Activated CD4-positive, alpha-beta T cell treated with anti-CD3 and anti-CD28 coated beads for 36 hours (primary cell): ENCODE measurements at regions of chr3 and their contacts with region 1.

Region 1: DNA sequence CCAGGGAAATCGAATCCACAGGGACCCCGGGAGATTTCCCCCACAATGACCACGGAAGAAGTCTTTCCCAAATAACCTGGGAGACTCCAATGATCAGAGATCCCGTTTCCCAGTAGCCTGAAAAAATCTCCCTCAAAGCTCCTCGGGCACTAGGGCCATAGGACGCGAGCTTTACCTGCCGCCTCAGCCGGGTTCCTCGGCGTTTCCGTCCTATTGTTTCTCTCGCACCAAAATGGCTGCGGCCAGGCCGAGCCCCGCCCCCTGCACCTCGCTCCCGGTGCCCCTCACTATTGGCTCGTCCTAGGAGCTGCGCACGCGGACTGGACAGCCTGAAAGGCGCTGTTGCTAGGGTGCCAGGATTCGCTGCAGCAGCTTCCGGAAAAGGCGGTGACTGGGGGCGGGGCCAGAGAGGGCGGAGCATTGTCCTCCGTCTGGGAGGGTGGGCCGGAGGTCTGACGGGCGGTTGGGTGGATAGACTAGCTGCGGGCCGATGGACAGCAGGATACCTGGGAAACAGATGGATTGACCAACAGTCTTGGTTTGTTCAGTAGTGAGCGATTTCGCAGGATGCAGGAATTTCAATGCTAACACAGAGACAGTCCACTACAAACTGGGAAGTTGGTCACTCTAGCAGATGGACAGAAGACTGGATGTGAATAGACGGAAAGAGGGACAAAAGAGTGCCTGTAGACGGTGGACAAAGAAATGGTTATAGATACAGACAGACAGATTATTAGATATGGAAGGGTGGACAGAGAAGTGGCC is at the start of gene IP6K2:
- DNase-seq: peak; percentile 99
- ATAC-seq: peak; percentile 100
- H3K4me3 Mint-ChIP-seq: peak within 1 kb of the TSS; percentile 97
- H3K27ac Mint-ChIP-seq: peak within 1 kb of the TSS; percentile 97
- H3K4me1 Mint-ChIP-seq: peaks cover 31% of the 10 kb centered on the region
- H3K27me3 Mint-ChIP-seq: no peaks in the 10 kb centered on the region
- total RNA-seq, gene IP6K2: 39.4 to 48.3 TPM

Region 2: GRCh38 chr3:48188266-48189201 is 528.6 kb before region 1 on chr3 and contains the start of gene CDC25A:
- CTCF ChIA-PET with region 1: no interaction called
- POLR2A ChIA-PET with region 1: no interaction called
- intact Hi-C with region 1: loop called in 1 of 2 experiments (anchors 1 kb)
- DNase-seq: peak; percentile 98
- ATAC-seq: peak; percentile 99
- H3K4me3 Mint-ChIP-seq: peak within 1 kb of the TSS; percentile 96
- H3K27ac Mint-ChIP-seq: peak within 1 kb of the TSS; percentile 79
- H3K4me1 Mint-ChIP-seq: peaks cover 15% of the 10 kb centered on the region
- H3K27me3 Mint-ChIP-seq: peaks cover 7% of the 10 kb centered on the region
- total RNA-seq, gene CDC25A: 32.5 to 33.9 TPM

Region 3: DNA sequence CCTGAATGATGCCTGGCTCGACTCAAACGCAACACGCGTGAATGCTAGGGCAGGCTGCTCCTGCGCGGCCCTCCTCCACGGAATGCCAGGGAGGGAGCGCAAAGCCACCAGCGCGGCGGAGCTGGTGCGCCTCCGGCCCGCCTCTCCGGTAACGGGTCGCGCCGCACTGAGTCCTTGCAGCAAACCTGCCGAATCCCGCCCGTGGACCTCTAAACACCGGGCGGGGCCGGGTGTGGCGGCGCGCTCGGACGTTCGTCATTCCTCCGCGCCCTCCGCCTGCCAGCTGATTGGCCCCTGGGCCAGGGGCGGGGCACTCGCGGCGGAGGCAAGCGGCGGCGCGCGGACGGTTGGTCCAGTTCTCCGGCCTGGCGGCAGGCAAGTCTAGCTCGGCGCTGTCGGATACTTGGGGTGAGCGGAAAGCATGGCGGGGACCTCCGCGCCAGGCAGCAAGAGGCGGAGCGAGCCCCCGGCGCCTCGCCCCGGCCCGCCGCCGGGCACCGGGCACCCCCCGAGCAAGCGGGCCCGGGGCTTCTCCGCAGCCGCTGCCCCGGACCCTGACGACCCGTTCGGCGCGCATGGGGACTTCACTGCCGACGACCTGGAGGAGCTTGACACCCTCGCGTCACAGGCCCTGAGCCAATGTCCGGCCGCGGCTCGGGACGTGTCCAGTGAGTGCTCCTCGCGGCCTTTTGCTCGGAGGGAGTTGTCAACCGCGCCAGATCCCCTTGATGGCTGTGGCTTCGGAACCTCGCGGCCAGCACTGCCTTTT is 270.6 kb before region 1 on chr3 and contains the start of gene ATRIP:
- CTCF ChIA-PET with region 1: no interaction called
- POLR2A ChIA-PET with region 1: no interaction called
- intact Hi-C with region 1: loop called in 1 of 2 experiments (anchors 2 kb)
- DNase-seq: peak; percentile 91
- ATAC-seq: peak; percentile 98
- H3K4me3 Mint-ChIP-seq: peak within 1 kb of the TSS; percentile 83
- H3K27ac Mint-ChIP-seq: peak within 1 kb of the TSS; percentile 79
- H3K4me1 Mint-ChIP-seq: peaks cover 42% of the 10 kb centered on the region
- H3K27me3 Mint-ChIP-seq: no peaks in the 10 kb centered on the region
- total RNA-seq, gene ATRIP: 16.8 to 21.0 TPM

Region 4: GRCh38 chr3:48656061-48656840 is 60.9 kb before region 1 on chr3:
- CTCF ChIA-PET with region 1: no interaction called
- POLR2A ChIA-PET with region 1: no interaction called
- intact Hi-C with region 1: loop called in 1 of 2 experiments (anchors 2 kb)
- DNase-seq: peak; percentile 94
- ATAC-seq: peak; percentile 83
- H3K4me3 Mint-ChIP-seq: peak overlapping the region; percentile 71
- H3K27ac Mint-ChIP-seq: peak overlapping the region; percentile 87
- H3K4me1 Mint-ChIP-seq: peaks cover 6% of the 10 kb centered on the region
- H3K27me3 Mint-ChIP-seq: peaks cover 16% of the 10 kb centered on the region

Region 5: GRCh38 chr3:48685602-48686511 is 31.3 kb before region 1 on chr3 and contains the start of gene NCKIPSD:
- CTCF ChIA-PET with region 1: interaction called, 10 read pairs
- POLR2A ChIA-PET with region 1: interaction called, 3 read pairs
- intact Hi-C with region 1: loop called (anchors 1 to 2 kb)
- DNase-seq: peak; percentile 96
- ATAC-seq: peak; percentile 94
- H3K4me3 Mint-ChIP-seq: peak within 1 kb of the TSS; percentile 82
- H3K27ac Mint-ChIP-seq: peak within 1 kb of the TSS; percentile 68
- H3K4me1 Mint-ChIP-seq: peaks cover 16% of the 10 kb centered on the region
- H3K27me3 Mint-ChIP-seq: no peaks in the 10 kb centered on the region
- total RNA-seq, gene NCKIPSD: 61.0 to 67.3 TPM

Region 6: GRCh38 chr3:48966876-48967361 is 249.8 kb after region 1 on chr3:
- CTCF ChIA-PET with region 1: no interaction called
- POLR2A ChIA-PET with region 1: no interaction called
- intact Hi-C with region 1: no loop called
- DNase-seq: peak; percentile 75
- ATAC-seq: peak; percentile 86
- H3K4me3 Mint-ChIP-seq: no peak overlapping the region
- H3K27ac Mint-ChIP-seq: peak overlapping the region; percentile 88
- H3K4me1 Mint-ChIP-seq: peaks cover 17% of the 10 kb centered on the region
- H3K27me3 Mint-ChIP-seq: no peaks in the 10 kb centered on the region

Region 7: DNA sequence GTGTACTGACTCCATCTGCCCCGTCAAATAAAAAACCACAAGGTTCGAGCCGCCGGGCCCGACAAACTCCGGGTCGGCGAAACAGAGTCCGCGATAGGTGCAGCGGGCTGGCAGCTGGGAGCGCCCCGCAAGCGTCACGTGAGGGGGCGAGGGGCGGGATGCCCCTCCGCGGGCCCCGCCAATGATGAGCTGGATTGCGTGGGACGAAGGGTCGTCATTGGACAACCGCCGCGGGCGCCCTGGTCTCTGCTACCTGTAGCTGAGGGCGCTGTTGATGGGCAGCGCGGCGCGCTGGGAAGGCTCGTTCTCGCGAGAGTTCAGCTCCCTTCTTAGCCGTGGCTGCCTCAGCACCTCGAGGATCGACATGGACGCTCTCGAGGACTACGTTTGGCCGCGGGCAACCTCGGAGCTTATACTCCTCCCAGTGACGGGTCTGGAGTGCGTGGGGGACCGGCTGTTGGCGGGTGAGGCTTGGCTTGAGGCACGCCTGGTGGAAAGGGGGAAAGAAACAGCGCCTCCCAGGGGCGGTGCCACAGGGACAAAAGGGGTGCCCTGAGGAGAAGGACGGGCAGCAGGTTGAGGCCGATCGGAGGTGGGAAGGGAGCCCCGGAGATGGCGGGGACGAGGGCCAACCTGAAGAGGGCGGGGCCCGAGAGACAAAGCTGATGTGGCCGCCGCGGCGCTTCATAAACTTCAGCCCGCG is 290.1 kb after region 1 on chr3 and contains the start of gene WDR6:
- CTCF ChIA-PET with region 1: interaction called, 3 read pairs
- POLR2A ChIA-PET with region 1: interaction called, 4 read pairs
- intact Hi-C with region 1: loop called in 1 of 2 experiments (anchors 1 kb)
- DNase-seq: peak; percentile 99
- ATAC-seq: peak; percentile 90
- H3K4me3 Mint-ChIP-seq: peak within 1 kb of the TSS; percentile 100
- H3K27ac Mint-ChIP-seq: peak within 1 kb of the TSS; percentile 100
- H3K4me1 Mint-ChIP-seq: peaks cover 16% of the 10 kb centered on the region
- H3K27me3 Mint-ChIP-seq: no peaks in the 10 kb centered on the region
- total RNA-seq, gene WDR6: 109 to 127 TPM

Region 8: DNA sequence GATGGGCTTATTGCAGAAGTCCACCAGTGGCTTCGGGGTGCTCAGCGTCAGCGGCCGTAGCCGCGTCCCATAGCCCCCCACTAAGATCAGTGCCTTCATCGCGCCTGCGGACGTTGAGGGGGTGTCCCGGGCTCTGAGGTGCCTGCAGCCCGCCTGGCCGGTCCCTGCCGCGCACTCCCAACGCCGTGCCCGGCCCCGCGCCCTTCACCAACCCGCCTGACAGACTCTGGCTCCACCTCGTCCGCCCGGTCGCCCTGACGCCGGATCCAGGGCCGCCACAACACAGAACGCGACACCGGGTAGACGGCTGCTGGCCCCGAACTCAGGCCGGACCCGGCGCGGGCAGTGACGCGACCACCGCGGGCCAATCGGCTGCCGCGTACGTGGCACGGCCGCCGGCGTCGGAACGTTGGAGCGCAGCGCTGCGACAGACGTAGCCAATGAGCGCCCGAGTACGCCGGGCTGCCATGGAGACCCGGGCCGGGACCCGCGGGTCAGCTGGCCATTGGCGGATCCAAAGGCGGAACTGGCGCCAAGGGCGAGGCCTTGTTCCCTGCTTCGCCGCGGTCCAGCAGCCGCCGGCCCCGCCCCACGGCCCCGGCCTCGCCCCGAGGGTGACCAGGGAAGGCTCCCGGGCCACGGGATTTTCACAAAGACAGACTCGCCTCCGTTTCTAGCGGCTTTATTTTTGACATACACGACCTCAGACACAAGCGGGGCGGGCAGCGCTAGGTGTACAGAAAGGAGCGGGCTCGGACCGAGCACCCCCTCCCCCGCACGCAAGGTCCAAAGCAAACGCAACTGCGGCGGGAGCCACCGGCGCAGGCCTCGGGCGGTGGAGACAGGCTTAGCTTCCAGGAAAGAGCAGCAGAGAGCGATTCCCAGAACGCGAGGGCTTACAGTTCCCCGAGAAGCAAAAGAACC is 1006.7 kb after region 1 on chr3 and contains the start of gene GMPPB:
- CTCF ChIA-PET with region 1: no interaction called
- POLR2A ChIA-PET with region 1: no interaction called
- intact Hi-C with region 1: loop called in 1 of 2 experiments (anchors 5 kb)
- DNase-seq: peak; percentile 97
- ATAC-seq: peak; percentile 87
- H3K4me3 Mint-ChIP-seq: peak within 1 kb of the TSS; percentile 92
- H3K27ac Mint-ChIP-seq: peak within 1 kb of the TSS; percentile 96
- H3K4me1 Mint-ChIP-seq: peaks cover 22% of the 10 kb centered on the region
- H3K27me3 Mint-ChIP-seq: no peaks in the 10 kb centered on the region
- total RNA-seq, gene GMPPB: 21.0 to 32.1 TPM